ENCODE measurements at regions of chr3 and their contacts with region 1.

Region 1: DNA sequence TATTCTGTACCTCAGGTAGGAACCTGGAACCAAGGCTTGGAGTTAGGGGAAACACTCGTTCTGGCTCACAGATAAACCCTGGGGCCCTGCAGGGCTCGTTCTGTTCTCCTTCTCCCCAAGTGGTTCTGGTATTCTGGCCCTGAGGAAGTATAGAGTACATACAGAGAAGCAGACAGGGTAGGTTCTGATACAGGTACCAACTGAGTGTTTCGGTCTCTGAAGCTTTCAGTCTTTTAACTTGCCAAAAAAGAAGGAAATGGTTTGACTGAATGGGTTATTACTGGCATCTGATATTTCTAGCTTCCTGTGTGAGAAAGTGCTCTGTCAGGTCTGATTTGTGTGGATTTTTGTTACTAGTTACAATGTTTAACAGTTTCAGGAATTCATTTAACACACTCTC is 67.3 kb downstream of the UBE2E2 start:
- DNase-seq: no peak
- H3K4me3 Mint-ChIP-seq: no peak overlapping the region
- H3K27ac Mint-ChIP-seq: no peak overlapping the region
- H3K4me1 Mint-ChIP-seq: peaks cover 11% of the 10 kb centered on the region
- H3K27me3 Mint-ChIP-seq: no peaks in the 10 kb centered on the region
- CTCF ChIP-seq: no peak

Region 2: DNA sequence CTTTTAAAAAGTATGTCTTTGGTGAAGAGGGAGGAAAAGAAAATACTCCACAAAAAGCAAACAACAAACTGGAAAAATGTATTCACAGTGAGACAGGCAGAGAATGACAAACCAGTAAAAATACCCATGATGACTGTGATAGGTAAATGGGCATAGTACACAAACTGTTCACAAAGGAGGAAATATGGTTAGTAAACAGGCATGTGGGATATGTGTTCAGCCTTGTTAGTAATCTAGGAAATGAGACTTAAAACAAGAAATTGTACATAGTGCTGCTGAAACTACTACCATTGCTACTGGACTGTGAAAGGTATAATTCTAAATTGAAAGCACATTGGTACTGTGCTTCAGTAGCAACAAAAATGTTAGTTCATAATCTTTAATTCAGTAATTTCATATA is 17.2 kb before region 1 on chr3:
- CTCF ChIA-PET with region 1: no interaction called
- POLR2A ChIA-PET with region 1: no interaction called
- intact Hi-C with region 1: no loop called
- DNase-seq: no peak
- H3K4me3 Mint-ChIP-seq: no peak overlapping the region
- H3K27ac Mint-ChIP-seq: no peak overlapping the region
- H3K4me1 Mint-ChIP-seq: peaks cover 21% of the 10 kb centered on the region
- H3K27me3 Mint-ChIP-seq: no peaks in the 10 kb centered on the region
- CTCF ChIP-seq: no peak

Region 3: GRCh38 chr3:23365066-23365465 is 94.6 kb after region 1 on chr3:
- CTCF ChIA-PET with region 1: no interaction called
- POLR2A ChIA-PET with region 1: no interaction called
- intact Hi-C with region 1: no loop called
- DNase-seq: no peak
- H3K4me3 Mint-ChIP-seq: no peak overlapping the region
- H3K27ac Mint-ChIP-seq: no peak overlapping the region
- H3K4me1 Mint-ChIP-seq: no peaks in the 10 kb centered on the region
- H3K27me3 Mint-ChIP-seq: no peaks in the 10 kb centered on the region
- CTCF ChIP-seq: no peak

Region 4: DNA sequence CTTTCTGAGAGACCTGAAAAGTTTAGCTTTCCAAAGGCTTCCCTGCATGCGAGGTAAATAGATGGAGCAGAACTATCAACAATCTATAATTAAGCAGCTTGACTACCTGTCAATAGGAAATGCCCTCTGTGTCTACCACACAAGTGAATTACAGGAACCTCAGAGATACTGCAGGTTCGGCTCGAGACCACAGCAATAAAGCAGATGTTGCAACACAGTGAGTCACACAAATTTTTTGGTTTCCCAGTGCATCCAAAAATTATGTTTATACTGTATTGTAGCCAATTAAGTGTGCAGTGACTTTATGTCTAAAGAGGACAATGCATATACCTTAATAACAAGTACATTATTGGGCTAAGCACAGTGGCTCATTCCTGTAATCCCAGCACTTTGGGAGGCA is 184.7 kb after region 1 on chr3:
- CTCF ChIA-PET with region 1: interaction called, 3 read pairs
- POLR2A ChIA-PET with region 1: no interaction called
- intact Hi-C with region 1: loop called (anchors 10 kb)
- DNase-seq: peak; percentile 92
- H3K4me3 Mint-ChIP-seq: no peak overlapping the region
- H3K27ac Mint-ChIP-seq: no peak overlapping the region
- H3K4me1 Mint-ChIP-seq: peaks cover 27% of the 10 kb centered on the region
- H3K27me3 Mint-ChIP-seq: no peaks in the 10 kb centered on the region
- CTCF ChIP-seq: no peak

Measured in MCF 10A (cell line).